ENCODE measurements at regions of chr3 and their contacts with region 1.

Region 1: GRCh38 chr3:179181021-179181472 is 32.9 kb downstream of the PIK3CA start:
- DNase-seq: no peak
- H3K4me3 Mint-ChIP-seq: no peak overlapping the region
- H3K27ac Mint-ChIP-seq: no peak overlapping the region
- H3K4me1 Mint-ChIP-seq: peaks cover 40% of the 10 kb centered on the region
- H3K27me3 Mint-ChIP-seq: no peaks in the 10 kb centered on the region

Region 2: DNA sequence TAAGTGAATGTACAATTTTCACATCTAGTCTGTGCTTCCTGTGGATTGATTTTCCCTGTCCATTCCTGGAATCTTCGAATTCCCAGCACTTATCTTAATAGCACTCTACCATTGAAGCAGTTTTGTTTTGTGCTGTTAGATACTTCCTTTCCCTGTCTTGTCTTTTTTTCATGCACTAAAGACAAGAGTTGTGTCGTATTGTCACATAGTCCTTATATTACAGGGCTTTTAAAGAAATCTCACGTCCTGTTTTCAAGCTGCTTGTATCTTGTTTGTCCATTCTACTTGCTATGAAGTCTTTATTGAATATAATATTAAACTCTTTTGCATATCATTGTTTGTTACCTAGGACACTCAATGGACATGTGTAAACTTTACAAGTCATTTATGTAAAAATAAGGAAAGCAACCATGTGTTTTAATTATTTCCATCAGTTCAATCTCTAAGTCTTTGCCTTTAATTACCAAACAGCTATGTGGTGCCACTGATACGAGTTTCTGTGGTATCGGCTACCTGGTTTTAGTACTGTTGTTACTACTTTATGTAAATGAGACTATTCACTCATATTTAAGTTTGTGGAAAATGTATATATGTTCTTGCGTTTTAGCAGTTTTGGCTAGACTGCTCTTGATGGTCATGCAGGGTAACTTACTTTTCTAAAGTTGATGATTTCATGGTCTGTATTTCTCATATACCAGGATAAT is 22.6 kb before region 1 on chr3:
- CTCF ChIA-PET with region 1: interaction called, 4 read pairs
- POLR2A ChIA-PET with region 1: no interaction called
- intact Hi-C with region 1: loop called (anchors 2 kb)
- DNase-seq: no peak
- H3K4me3 Mint-ChIP-seq: no peak overlapping the region
- H3K27ac Mint-ChIP-seq: no peak overlapping the region
- H3K4me1 Mint-ChIP-seq: peaks cover 54% of the 10 kb centered on the region
- H3K27me3 Mint-ChIP-seq: no peaks in the 10 kb centered on the region

Region 3: DNA sequence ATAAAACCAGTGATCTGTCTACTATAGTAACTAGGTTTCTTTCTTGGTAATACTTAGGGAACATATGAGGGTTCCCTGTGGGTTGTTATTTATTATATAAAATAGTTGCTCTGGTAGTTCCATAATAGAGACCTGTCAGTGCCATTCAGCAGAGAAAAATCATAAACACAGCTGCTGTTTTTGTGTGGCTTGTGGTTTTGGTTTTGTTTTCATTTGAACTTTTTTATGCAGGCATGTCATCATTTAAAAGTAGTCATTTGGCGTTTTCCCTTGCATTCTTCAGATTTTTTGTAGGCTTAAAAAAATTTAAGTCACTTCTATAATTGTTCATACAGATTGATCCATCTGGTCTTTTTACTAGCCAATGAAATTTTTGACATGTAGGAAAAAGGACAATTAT is 15.1 kb after region 1 on chr3:
- CTCF ChIA-PET with region 1: interaction called, 3 read pairs
- POLR2A ChIA-PET with region 1: interaction called, 5 read pairs
- intact Hi-C with region 1: loop called (anchors 1 kb)
- DNase-seq: no peak
- H3K4me3 Mint-ChIP-seq: no peak overlapping the region
- H3K27ac Mint-ChIP-seq: peak overlapping the region; percentile 18
- H3K4me1 Mint-ChIP-seq: peaks cover 40% of the 10 kb centered on the region
- H3K27me3 Mint-ChIP-seq: no peaks in the 10 kb centered on the region

Region 4: DNA sequence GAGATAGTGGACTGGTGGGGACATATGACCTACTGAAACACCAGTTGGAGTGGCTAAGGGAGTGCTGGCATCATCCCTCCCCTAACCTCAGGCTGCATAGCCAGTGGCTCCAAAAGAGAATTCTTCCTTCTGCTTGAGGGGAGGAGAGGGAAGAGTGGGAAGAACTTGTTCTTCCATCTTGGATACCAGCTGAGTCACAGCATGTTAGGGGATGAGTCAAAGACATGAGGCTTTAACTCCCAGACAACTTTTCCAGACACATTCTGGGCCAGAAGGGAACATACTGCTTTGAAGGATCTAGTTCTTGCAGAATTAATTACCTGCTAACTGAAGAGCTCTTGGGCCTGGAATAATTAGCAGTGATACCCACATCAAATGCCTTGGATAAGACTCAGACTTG is 892.5 kb after region 1 on chr3:
- CTCF ChIA-PET with region 1: no interaction called
- POLR2A ChIA-PET with region 1: no interaction called
- intact Hi-C with region 1: no loop called
- DNase-seq: no peak
- H3K4me3 Mint-ChIP-seq: no peak overlapping the region
- H3K27ac Mint-ChIP-seq: no peak overlapping the region
- H3K4me1 Mint-ChIP-seq: no peaks in the 10 kb centered on the region
- H3K27me3 Mint-ChIP-seq: no peaks in the 10 kb centered on the region